Panc1 (cell line): ENCODE measurements at regions of chr11 and their contacts with region 1.

Region 1: DNA sequence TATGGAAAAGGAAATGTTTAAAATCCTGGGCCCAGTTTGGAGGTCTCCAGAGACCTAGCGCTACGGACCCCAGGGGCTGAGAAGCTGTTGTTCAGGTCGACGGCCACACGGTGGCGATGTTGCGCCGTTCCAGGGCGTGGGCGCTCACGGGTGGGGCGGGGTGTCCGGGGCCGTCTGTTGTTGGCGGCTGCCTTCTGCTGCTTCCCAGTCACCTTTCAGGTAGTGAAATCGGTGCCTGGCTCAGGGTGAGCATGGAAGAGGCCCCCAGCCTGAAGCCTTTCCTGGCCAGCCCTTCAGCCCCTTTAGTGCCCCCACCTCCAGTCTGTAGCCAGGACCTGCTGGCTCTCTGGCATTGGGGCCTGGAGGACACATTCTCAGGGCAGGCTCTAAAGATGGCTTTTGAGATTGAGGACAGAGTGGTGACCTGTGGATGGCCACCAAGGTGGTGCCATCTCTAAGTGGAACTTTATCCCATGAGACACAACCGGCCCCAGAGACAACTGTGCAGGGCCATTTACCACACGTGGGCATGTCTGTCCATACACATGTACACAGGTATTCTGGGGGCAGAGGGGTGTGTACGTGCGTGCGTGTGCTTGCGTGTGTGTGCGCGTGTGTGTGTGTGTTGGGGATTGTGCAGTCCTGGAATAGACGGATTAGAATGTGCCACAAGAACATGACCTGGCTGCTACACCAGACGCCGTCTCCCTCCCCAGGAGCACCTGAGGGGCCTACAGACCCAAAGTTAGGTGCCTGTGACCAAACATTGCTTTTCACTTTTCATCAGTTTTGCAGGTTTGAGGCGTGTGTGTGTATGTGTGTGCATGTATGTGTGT is 53.8 kb downstream of the ST14 start:
- DNase-seq: peak; percentile 12
- ATAC-seq: peak; percentile 86
- H3K4me3 ChIP-seq: peak overlapping the region in 1 of 2 experiments; percentile 17; a peak in 2 of 4 replicates
- H3K27ac ChIP-seq: no peak overlapping the region
- H3K4me1 ChIP-seq: 0 out of 2 replicates have a peak, but pooled peaks cover 2% of the 10 kb centered on the region
- H3K27me3 ChIP-seq: no peaks in the 10 kb centered on the region
- CTCF ChIP-seq: peak; percentile 98

Region 2: GRCh38 chr11:130202009-130202817 is 11.1 kb before region 1 on chr11:
- CTCF ChIA-PET with region 1: interaction called, 11 read pairs
- POLR2A ChIA-PET with region 1: no interaction called
- in situ Hi-C with region 1: no loop called
- intact Hi-C with region 1: no loop called
- DNase-seq: no peak
- ATAC-seq: no peak
- H3K4me3 ChIP-seq: no peak overlapping the region
- H3K27ac ChIP-seq: no peak overlapping the region
- H3K4me1 ChIP-seq: no peaks in the 10 kb centered on the region
- H3K27me3 ChIP-seq: no peaks in the 10 kb centered on the region
- CTCF ChIP-seq: no peak

Region 3: DNA sequence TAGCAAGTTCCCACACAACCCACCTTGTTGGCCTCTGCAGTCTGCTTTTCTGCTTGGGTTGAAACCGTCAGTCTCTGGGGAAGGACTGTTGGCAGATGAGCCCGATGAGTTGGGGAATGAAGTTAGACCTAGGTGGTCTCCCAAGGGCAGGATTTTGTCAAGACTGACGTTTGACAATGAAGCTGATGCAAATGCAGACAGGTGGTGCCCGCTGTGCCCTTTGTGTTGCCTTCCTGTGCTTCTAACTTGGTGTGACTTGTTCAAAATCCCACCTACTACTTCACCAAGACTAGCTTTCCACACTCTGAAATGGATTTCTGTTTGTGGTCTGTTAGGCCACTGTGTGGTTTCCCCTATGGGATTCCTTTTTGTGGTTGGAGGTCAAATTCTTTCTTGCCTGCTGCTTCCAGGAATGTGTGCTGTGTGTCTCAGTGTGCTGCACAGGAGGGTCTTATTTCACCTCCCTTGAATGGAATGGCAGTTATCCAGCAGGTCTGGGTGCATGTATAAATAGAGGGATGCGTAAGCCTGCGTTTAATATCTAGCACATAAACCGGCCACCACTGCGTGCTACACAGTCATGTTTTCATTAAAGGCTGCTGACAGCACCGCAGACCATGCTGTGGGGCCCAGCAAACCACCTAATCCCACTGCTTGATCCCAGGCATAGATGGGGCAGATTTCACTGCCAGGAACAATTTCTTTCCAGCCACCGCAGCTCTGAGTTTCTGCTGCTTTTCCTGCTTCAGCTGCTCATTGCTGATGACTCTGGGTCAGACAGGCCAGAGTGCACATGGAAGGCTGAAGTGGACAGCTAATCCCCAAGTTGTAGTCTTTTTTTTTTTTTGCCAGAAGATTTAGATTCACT is 170.2 kb after region 1 on chr11:
- CTCF ChIA-PET with region 1: no interaction called
- POLR2A ChIA-PET with region 1: no interaction called
- in situ Hi-C with region 1: no loop called
- intact Hi-C with region 1: loop called (anchors 10 kb)
- DNase-seq: no peak
- ATAC-seq: no peak; the same call in 1 of the 2 replicates
- H3K4me3 ChIP-seq: no peak overlapping the region
- H3K27ac ChIP-seq: no peak overlapping the region
- H3K4me1 ChIP-seq: no peaks in the 10 kb centered on the region
- H3K27me3 ChIP-seq: no peaks in the 10 kb centered on the region
- CTCF ChIP-seq: no peak

Region 4: GRCh38 chr11:130427581-130428315 is 214.4 kb after region 1 on chr11:
- CTCF ChIA-PET with region 1: interaction called, 16 read pairs
- POLR2A ChIA-PET with region 1: no interaction called
- in situ Hi-C with region 1: no loop called
- intact Hi-C with region 1: loop called (anchors 2 kb)
- DNase-seq: no peak
- ATAC-seq: peak; percentile 52
- H3K4me3 ChIP-seq: peak overlapping the region; percentile 22 to 37
- H3K27ac ChIP-seq: no peak overlapping the region
- H3K4me1 ChIP-seq: 0 out of 2 replicates have a peak, but pooled peaks cover 9% of the 10 kb centered on the region
- H3K27me3 ChIP-seq: peaks cover 35% of the 10 kb centered on the region
- CTCF ChIP-seq: no peak; the same call in 1 of the 2 replicates